Naive thymus-derived CD4-positive, alpha-beta T cell (primary cell): ENCODE measurements at regions of chr3 and their contacts with region 1.

Region 1: GRCh38 chr3:49093853-49094767 is at the start of gene QRICH1:
- DNase-seq: peak; percentile 93 to 98 (median 96)
- ATAC-seq: peak; percentile 86
- H3K4me3 ChIP-seq: peak within 1 kb of the TSS; percentile 100
- H3K4me3 Mint-ChIP-seq: peak within 1 kb of the TSS; percentile 85 to 99 (median 96)
- H3K27ac ChIP-seq: peak within 1 kb of the TSS; percentile 87
- H3K27ac Mint-ChIP-seq: peak within 1 kb of the TSS; percentile 88 to 99 (median 97)
- H3K4me1 ChIP-seq: peaks cover 26 to 35% of the 10 kb centered on the region in 2 donors
- H3K4me1 Mint-ChIP-seq: peaks cover 25 to 49% (median 34%) of the 10 kb centered on the region in 7 donors
- H3K27me3 ChIP-seq: no peaks in the 10 kb centered on the region
- H3K27me3 Mint-ChIP-seq: no peaks in the 10 kb centered on the region
- total RNA-seq, gene QRICH1: 146 to 192 (median 184) TPM

Region 2: DNA sequence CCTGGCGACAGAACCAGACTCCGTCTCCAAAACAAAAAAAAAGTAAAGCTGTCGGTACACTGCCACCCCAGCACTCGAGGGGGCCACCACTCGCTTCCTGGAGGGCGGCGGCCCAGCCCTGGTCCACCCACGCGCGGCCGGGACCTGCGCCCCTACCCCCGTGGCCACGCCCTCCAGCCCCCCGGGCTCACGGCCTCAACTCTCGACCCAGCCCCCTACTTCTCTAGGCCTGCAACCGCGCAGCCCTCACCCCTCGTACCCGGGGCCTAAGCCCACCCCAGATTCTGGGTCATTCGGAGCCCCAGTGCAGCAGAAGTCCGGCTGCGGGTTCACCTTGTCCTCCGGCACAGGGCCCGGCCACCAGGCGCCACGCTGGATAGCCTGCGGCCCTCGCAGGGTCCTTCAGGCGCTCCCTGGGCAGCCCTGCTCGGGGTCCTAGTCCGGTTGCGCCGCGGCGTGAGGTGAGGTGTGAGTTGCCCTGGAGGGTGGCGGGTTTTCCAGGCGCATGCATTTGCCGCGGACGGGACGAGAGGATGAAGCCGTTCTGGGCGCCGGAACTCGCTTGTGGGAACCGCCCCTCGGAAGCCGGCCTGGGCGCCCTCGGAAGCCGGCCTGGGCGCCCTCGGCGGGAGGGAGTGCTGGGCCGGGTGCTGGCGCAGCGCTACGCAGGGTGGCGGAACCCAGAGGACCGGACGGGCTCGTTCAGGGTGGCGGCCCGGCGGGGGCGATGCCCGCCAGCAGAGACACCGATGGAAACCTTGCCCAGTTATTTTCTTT is 792.9 kb before region 1 on chr3:
- CTCF ChIA-PET with region 1: no interaction called
- POLR2A ChIA-PET with region 1: no interaction called
- intact Hi-C with region 1: loop called in 1 of 2 experiments (anchors 5 kb)
- DNase-seq: peak; percentile 69 to 95 (median 81)
- ATAC-seq: peak; percentile 97
- H3K4me3 ChIP-seq: peak within 1 kb of the TSS; percentile 89
- H3K4me3 Mint-ChIP-seq: peak within 1 kb of the TSS; percentile 84 to 97 (median 91)
- H3K27ac ChIP-seq: peak within 1 kb of the TSS; percentile 96
- H3K27ac Mint-ChIP-seq: peak within 1 kb of the TSS; percentile 81 to 98 (median 94)
- H3K4me1 ChIP-seq: peaks cover 10 to 12% of the 10 kb centered on the region in 2 donors
- H3K4me1 Mint-ChIP-seq: peaks cover 26 to 47% (median 40%) of the 10 kb centered on the region in 7 donors
- H3K27me3 ChIP-seq: no peaks in the 10 kb centered on the region
- H3K27me3 Mint-ChIP-seq: peaks cover 0 to 13% (median 0%) of the 10 kb centered on the region in 5 donors

Region 3: DNA sequence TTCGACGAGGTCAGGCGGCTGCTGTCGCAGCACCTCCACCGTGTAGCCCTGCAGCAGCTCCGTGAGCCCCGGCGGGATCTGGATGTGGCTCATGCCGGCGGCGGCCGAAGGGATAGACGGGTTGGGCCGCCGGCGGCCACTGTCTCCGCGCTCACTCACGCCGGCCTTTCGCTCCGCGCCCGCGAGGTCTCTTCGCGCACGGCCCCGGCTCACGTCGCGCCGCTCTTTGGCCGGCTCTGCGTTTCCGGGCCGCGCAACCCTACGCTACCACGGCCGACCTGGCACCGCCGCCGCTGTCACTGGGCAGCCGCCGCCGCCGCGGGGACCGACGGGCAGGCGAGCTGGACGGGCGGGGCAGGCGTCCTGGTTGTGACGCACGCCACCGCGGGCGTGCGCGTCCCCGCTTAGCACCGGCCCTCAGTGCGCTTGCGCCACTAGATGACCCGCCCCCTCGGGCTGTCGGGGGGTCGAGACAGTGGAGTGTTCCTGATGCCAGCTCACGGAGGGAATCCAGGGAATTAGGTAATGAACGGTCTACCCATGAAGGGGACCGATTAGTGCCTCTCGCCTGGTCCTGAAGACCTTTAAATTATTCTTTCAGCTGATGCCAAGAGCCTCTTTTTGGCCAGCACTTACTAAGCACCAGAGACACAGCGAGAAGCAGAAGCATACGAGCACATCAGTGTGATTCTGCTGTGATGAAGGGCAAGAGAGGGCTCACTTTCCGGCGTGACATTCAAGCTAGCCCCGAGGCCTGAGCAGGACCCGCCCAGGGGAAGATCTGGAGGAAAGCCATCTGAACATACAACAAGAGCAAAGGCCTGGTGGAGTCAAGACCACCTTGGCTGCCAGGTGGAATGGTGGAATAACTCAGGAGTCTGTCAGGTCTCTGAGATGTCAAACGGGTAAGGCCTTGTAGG is 246.3 kb before region 1 on chr3 and contains the start of gene PRKAR2A:
- CTCF ChIA-PET with region 1: no interaction called
- POLR2A ChIA-PET with region 1: no interaction called
- intact Hi-C with region 1: loop called in 1 of 2 experiments (anchors 5 kb)
- DNase-seq: peak; percentile 51 to 87 (median 67)
- ATAC-seq: peak; percentile 92
- H3K4me3 ChIP-seq: peak within 1 kb of the TSS; percentile 70
- H3K4me3 Mint-ChIP-seq: peak within 1 kb of the TSS; percentile 86 to 93 (median 90)
- H3K27ac ChIP-seq: peak within 1 kb of the TSS; percentile 79
- H3K27ac Mint-ChIP-seq: peak within 1 kb of the TSS; percentile 81 to 98 (median 94)
- H3K4me1 ChIP-seq: peaks cover 15 to 21% of the 10 kb centered on the region in 2 donors
- H3K4me1 Mint-ChIP-seq: peaks cover 12 to 34% (median 28%) of the 10 kb centered on the region in 7 donors
- H3K27me3 ChIP-seq: no peaks in the 10 kb centered on the region
- H3K27me3 Mint-ChIP-seq: no peaks in the 10 kb centered on the region
- total RNA-seq, gene PRKAR2A: 25.9 to 45.1 (median 38.9) TPM

Region 4: GRCh38 chr3:49028673-49029562 is 65.2 kb before region 1 on chr3 and contains the start of gene IMPDH2:
- CTCF ChIA-PET with region 1: no interaction called
- POLR2A ChIA-PET with region 1: interaction called, 30 read pairs
- intact Hi-C with region 1: loop called in 1 of 2 experiments (anchors 1 kb)
- DNase-seq: peak; percentile 89 to 95 (median 93)
- ATAC-seq: peak; percentile 97
- H3K4me3 ChIP-seq: peak within 1 kb of the TSS; percentile 74
- H3K4me3 Mint-ChIP-seq: peak within 1 kb of the TSS; percentile 86 to 96 (median 94)
- H3K27ac ChIP-seq: peak within 1 kb of the TSS; percentile 98
- H3K27ac Mint-ChIP-seq: peak within 1 kb of the TSS; percentile 92 to 100 (median 98)
- H3K4me1 ChIP-seq: peaks cover 10 to 11% of the 10 kb centered on the region in 2 donors
- H3K4me1 Mint-ChIP-seq: peaks cover 7 to 52% (median 34%) of the 10 kb centered on the region in 7 donors
- H3K27me3 ChIP-seq: no peaks in the 10 kb centered on the region
- H3K27me3 Mint-ChIP-seq: no peaks in the 10 kb centered on the region
- total RNA-seq, gene IMPDH2: 102 to 206 (median 121) TPM

Region 5: GRCh38 chr3:49165771-49166751 is 72.0 kb after region 1 on chr3 and contains the start of gene CCDC71:
- CTCF ChIA-PET with region 1: interaction called, 6 read pairs
- POLR2A ChIA-PET with region 1: interaction called, 16 read pairs
- intact Hi-C with region 1: loop called (anchors 1 kb)
- DNase-seq: peak; percentile 63 to 82 (median 72)
- ATAC-seq: peak; percentile 85
- H3K4me3 ChIP-seq: peak within 1 kb of the TSS; percentile 58
- H3K4me3 Mint-ChIP-seq: peak within 1 kb of the TSS; percentile 89 to 96 (median 92)
- H3K27ac ChIP-seq: peak within 1 kb of the TSS; percentile 79
- H3K27ac Mint-ChIP-seq: peak within 1 kb of the TSS; percentile 87 to 96 (median 93)
- H3K4me1 ChIP-seq: peaks cover 16 to 29% of the 10 kb centered on the region in 2 donors
- H3K4me1 Mint-ChIP-seq: peaks cover 16 to 51% (median 42%) of the 10 kb centered on the region in 7 donors
- H3K27me3 ChIP-seq: no peaks in the 10 kb centered on the region
- H3K27me3 Mint-ChIP-seq: no peaks in the 10 kb centered on the region
- total RNA-seq, gene CCDC71: 16.5 to 39.5 (median 26.3) TPM

Region 6: GRCh38 chr3:49428697-49429100 is 334.6 kb after region 1 on chr3:
- CTCF ChIA-PET with region 1: no interaction called
- POLR2A ChIA-PET with region 1: interaction called, 12 read pairs
- intact Hi-C with region 1: no loop called
- DNase-seq: peak in 1 of 9 donors; percentile 13
- ATAC-seq: no peak
- H3K4me3 ChIP-seq: peak overlapping the region; percentile 84
- H3K4me3 Mint-ChIP-seq: peak overlapping the region; percentile 88 to 98 (median 94)
- H3K27ac ChIP-seq: peak overlapping the region; percentile 83
- H3K27ac Mint-ChIP-seq: peak overlapping the region; percentile 49 to 96 (median 94)
- H3K4me1 ChIP-seq: peaks cover 0 to 5% of the 10 kb centered on the region in 2 donors
- H3K4me1 Mint-ChIP-seq: peaks cover 17 to 37% (median 28%) of the 10 kb centered on the region in 7 donors
- H3K27me3 ChIP-seq: no peaks in the 10 kb centered on the region
- H3K27me3 Mint-ChIP-seq: no peaks in the 10 kb centered on the region